Sciatic nerve (tissue), 2 donors: ENCODE measurements at regions of chr15 and their contacts with region 1.

Region 1: GRCh38 chr15:79678032-79678701 is 218.6 kb downstream of the MTHFS start:
- DNase-seq: no peak
- ATAC-seq: no peak

Region 2: GRCh38 chr15:79442911-79443310 is 235.3 kb before region 1 on chr15:
- intact Hi-C with region 1: no loop called
- DNase-seq: no peak
- ATAC-seq: no peak

Region 3: DNA sequence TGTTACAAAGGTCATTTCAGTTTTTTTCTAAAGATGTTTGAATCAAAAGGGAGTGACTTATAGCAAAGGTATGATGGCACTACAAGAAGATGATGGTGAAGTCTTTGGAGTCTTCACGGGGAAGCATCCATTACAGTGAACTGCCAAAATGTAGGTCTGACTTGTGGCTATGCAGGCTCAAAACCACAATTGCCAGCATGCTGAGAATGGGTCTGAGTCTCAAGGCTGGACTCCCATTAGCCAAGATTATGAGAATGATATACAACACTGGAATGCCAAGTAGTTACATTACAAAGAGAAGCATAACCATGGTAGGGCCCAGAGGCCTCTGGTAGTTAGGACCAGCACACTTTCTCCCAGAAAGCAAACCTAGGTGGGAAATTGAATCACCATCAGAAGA is 24.5 kb after region 1 on chr15:
- intact Hi-C with region 1: loop called (anchors 2 kb)
- DNase-seq: no peak
- ATAC-seq: no peak